ENCODE measurements at regions of chr10 and their contacts with region 1.

Region 1: DNA sequence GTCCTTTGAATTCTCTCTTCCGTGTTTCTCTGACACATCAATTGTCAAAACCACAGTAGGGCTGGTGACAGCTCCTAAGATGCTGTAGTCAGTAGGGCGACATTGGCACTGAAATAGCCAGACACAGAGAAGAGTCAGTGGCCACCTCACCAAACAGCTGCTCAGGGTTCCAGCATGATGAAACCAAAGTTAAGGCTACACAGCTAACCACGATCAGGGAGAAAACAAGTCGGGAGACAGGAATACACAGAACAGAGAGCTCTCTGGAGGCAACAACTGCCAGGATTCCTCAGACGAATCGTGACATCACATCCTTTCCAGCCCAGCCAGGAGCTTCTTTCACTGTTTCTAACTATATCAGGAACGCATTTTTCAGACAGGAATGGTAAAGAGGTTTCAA is 922.2 kb downstream of the SORCS1 start:
- DNase-seq: no peak
- H3K4me3 ChIP-seq: no peak overlapping the region
- H3K27ac ChIP-seq: no peak overlapping the region
- H3K4me1 ChIP-seq: no peaks in the 10 kb centered on the region
- H3K27me3 ChIP-seq: no peaks in the 10 kb centered on the region
- CTCF ChIP-seq: no peak
- EP300 ChIP-seq: no peak
- POLR2A ChIP-seq: no peak

Region 2: DNA sequence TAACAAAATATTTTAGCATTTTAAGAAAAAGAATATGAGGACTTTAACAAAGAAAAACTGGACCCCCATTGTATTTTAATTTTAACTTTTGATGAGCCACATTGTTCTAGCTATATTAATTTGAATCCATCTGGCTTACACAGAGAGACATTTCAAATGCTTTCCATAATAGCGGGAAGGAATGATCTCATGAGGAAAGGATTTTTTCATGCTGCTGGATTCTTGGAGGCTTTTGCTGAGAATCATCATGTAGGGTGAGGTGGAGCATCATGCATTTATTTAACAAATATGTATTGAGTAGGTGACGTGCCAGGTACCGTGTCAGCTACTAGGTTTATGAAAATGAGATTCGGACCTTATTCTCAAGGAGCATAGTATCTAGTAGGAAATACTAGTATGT is 84.1 kb before region 1 on chr10:
- intact Hi-C with region 1: no loop called
- DNase-seq: no peak
- H3K4me3 ChIP-seq: no peak overlapping the region
- H3K27ac ChIP-seq: no peak overlapping the region
- H3K4me1 ChIP-seq: no peaks in the 10 kb centered on the region
- H3K27me3 ChIP-seq: no peaks in the 10 kb centered on the region
- CTCF ChIP-seq: no peak
- EP300 ChIP-seq: no peak
- POLR2A ChIP-seq: no peak

Region 3: DNA sequence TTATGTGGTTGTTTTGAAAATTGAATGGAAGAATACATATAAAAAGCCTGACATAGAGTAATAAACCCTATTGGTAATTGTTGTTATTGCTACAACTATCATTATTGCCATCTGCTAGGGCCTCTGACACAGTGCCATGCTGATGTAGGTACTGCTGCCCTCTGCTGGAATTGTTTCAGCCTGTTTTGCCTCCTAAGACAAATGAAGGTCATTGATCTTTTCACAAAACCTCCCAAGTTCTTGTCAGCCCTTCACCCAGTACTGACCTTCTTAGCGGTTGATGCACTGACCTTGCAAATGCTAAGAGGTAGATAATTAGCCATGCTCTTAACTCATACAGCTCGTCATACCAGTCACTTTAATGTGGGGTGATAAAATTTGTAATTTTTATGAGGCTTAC is 53.0 kb before region 1 on chr10:
- intact Hi-C with region 1: no loop called
- DNase-seq: no peak
- H3K4me3 ChIP-seq: no peak overlapping the region
- H3K27ac ChIP-seq: no peak overlapping the region
- H3K4me1 ChIP-seq: no peaks in the 10 kb centered on the region
- H3K27me3 ChIP-seq: no peaks in the 10 kb centered on the region
- CTCF ChIP-seq: no peak
- EP300 ChIP-seq: no peak
- POLR2A ChIP-seq: no peak

Region 4: GRCh38 chr10:106500559-106501525 is 258.5 kb after region 1 on chr10:
- intact Hi-C with region 1: loop called in 1 of 4 experiments (anchors 5 kb)
- DNase-seq: no peak
- H3K4me3 ChIP-seq: no peak overlapping the region
- H3K27ac ChIP-seq: no peak overlapping the region
- H3K4me1 ChIP-seq: no peaks in the 10 kb centered on the region
- H3K27me3 ChIP-seq: no peaks in the 10 kb centered on the region
- CTCF ChIP-seq: no peak
- EP300 ChIP-seq: no peak
- POLR2A ChIP-seq: no peak

Region 5: GRCh38 chr10:106992055-106992454 is 749.8 kb after region 1 on chr10:
- intact Hi-C with region 1: loop called in 1 of 4 experiments (anchors 5 kb)
- DNase-seq: no peak
- H3K4me3 ChIP-seq: no peak overlapping the region
- H3K27ac ChIP-seq: no peak overlapping the region
- H3K4me1 ChIP-seq: no peaks in the 10 kb centered on the region
- H3K27me3 ChIP-seq: no peaks in the 10 kb centered on the region
- CTCF ChIP-seq: no peak
- EP300 ChIP-seq: no peak
- POLR2A ChIP-seq: no peak

Measured in ovary (tissue), 10 donors.